Colonic mucosa (tissue), 4 donors: ENCODE measurements at regions of chr11 and their contacts with region 1.

Region 1: GRCh38 chr11:62309991-62310390 is 11.1 kb upstream of the SCGB1D4 start:
- DNase-seq: no peak
- H3K4me3 ChIP-seq: no peak overlapping the region
- H3K27ac ChIP-seq: no peak overlapping the region
- H3K4me1 ChIP-seq: no peaks in the 10 kb centered on the region
- H3K27me3 ChIP-seq: no peaks in the 10 kb centered on the region
- CTCF ChIP-seq: no peak

Region 2: GRCh38 chr11:62223095-62223494 is 86.9 kb before region 1 on chr11:
- intact Hi-C with region 1: loop called (anchors 5 kb)
- DNase-seq: no peak
- H3K4me3 ChIP-seq: no peak overlapping the region
- H3K27ac ChIP-seq: no peak overlapping the region
- H3K4me1 ChIP-seq: no peaks in the 10 kb centered on the region
- H3K27me3 ChIP-seq: no peaks in the 10 kb centered on the region
- CTCF ChIP-seq: no peak